CD8-positive, alpha-beta T cell (primary cell): ENCODE measurements at regions of chr3 and their contacts with region 1.

Region 1: DNA sequence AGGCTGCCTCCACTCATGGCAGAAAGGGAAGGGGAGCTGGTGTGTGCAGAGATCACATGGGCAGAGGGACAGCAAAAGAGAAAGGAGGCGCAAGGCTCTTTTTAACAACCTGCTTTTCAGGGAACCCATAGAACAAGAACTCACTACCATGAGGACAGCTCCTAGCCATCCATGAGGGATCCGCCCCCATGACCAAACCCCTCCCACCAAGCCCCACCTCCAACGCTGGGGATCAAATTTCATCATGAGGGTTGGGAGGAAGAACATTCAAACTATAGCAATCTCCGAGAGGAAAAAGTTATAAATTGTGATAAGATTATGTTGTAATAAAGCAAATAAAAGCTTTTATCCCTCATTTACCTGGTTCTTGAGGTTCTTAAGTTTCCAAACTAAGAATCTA is 84.7 kb upstream of the LMCD1 start:
- DNase-seq: peak in 3 of 9 experiments; percentile 4 to 8 (median 8)
- ATAC-seq: no peak
- H3K4me3 ChIP-seq: no peak overlapping the region
- H3K4me3 Mint-ChIP-seq: no peak overlapping the region
- H3K27ac ChIP-seq: no peak overlapping the region
- H3K27ac Mint-ChIP-seq: no peak overlapping the region
- H3K4me1 ChIP-seq: peaks cover 5% of the 10 kb centered on the region
- H3K4me1 Mint-ChIP-seq: peaks cover 8% of the 10 kb centered on the region
- H3K27me3 ChIP-seq: no peaks in the 10 kb centered on the region
- H3K27me3 Mint-ChIP-seq: no peaks in the 10 kb centered on the region
- CTCF ChIP-seq: no peak

Region 2: GRCh38 chr3:7800006-7800780 is 616.8 kb before region 1 on chr3:
- CTCF ChIA-PET with region 1: interaction called, 9 read pairs
- POLR2A ChIA-PET with region 1: no interaction called
- intact Hi-C with region 1: loop called (anchors 5 to 10 kb)
- DNase-seq: peak in 2 of 9 experiments; percentile 7 to 14
- ATAC-seq: no peak
- H3K4me3 ChIP-seq: no peak overlapping the region
- H3K4me3 Mint-ChIP-seq: no peak overlapping the region
- H3K27ac ChIP-seq: no peak overlapping the region
- H3K27ac Mint-ChIP-seq: no peak overlapping the region
- H3K4me1 ChIP-seq: no peaks in the 10 kb centered on the region
- H3K4me1 Mint-ChIP-seq: no peaks in the 10 kb centered on the region
- H3K27me3 ChIP-seq: no peaks in the 10 kb centered on the region
- H3K27me3 Mint-ChIP-seq: no peaks in the 10 kb centered on the region
- CTCF ChIP-seq: peak; percentile 23

Region 3: DNA sequence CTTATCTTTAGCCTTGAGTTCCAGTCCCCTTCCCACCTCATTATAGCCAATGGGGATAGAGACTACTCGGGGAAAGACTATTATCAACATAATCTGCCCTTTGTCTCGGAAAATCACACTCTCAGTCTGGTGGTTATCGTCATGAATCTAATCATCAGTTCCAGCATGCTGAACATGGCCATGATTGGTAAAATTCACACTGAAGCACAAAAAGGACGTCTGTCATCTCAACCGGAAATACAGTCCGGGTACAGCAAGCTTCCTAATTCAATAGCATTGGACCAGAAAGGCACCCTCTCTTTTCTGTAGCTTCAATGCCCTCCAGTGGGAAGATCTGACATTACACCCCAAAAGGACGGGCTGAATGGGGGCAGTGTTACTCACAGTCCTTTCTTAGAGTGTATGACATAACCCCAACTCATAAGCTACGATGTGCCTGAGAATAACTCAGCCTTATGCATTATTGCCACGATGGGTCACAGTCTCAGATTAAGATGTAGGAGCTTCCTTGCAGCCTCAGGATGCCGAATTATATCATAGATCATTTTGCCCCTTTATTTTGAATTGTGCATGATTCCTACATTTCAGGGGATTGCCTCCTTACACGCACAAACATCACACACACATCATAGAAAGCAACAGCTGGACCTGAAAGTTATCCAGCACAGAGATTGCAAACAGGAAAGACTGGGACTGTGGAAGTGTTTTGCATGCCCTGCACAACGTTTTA is 305.7 kb before region 1 on chr3:
- CTCF ChIA-PET with region 1: no interaction called
- POLR2A ChIA-PET with region 1: no interaction called
- intact Hi-C with region 1: loop called in 1 of 2 experiments (anchors 5 kb)
- DNase-seq: peak; percentile 2 to 58 (median 39)
- ATAC-seq: peak; percentile 67
- H3K4me3 ChIP-seq: no peak overlapping the region
- H3K4me3 Mint-ChIP-seq: peak overlapping the region; percentile 27
- H3K27ac ChIP-seq: no peak overlapping the region
- H3K27ac Mint-ChIP-seq: no peak overlapping the region
- H3K4me1 ChIP-seq: no peaks in the 10 kb centered on the region
- H3K4me1 Mint-ChIP-seq: no peaks in the 10 kb centered on the region
- H3K27me3 ChIP-seq: no peaks in the 10 kb centered on the region
- H3K27me3 Mint-ChIP-seq: peaks cover 14% of the 10 kb centered on the region
- CTCF ChIP-seq: peak; percentile 56

Region 4: DNA sequence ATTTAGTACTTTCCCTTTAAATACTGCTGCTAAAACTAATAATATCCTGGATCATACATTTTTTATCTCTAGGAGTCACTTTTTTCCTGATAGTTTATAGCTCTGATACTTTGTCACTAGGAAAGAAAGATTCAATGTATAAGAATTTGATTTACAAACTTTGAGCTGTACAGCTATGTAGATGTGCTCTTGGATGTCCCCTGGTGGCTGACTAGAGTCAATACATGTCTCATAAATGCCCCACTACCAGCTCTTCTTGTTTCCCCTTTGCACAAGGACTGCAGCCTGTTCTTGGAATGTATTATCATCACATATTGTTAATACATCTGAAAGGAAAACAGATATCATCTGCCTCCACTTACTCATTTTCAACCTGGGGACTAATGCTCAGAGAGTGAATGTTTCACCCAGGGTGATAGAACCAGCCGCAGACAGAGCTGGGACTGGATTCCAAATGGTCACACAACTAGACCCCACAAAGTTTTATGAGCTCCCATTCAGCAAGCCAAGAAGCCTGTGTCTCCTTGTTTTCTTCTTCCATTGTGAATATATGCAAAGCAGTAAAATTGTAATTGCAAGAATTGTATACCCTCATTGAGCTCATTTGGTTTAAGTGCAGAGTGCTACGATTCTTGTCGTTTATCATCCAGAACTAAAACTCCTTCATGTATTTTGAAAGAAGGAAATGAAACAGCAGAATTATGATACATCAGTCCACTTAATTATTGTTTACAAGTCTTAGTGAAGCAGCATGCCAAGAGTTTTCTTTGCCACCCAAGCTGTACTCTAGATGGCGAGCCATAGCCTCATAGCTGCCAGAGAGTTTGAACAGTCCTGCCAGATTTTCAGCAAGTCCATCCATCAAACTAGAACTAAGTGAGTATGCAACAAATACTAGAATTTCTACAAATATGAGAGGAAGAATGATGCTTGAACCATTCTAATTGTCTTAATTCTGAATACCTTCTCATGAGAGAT is 177.0 kb before region 1 on chr3:
- CTCF ChIA-PET with region 1: interaction called, 9 read pairs
- POLR2A ChIA-PET with region 1: no interaction called
- intact Hi-C with region 1: loop called in 1 of 2 experiments (anchors 5 kb)
- DNase-seq: peak in 4 of 9 experiments; percentile 11 to 51 (median 32)
- ATAC-seq: no peak
- H3K4me3 ChIP-seq: no peak overlapping the region
- H3K4me3 Mint-ChIP-seq: no peak overlapping the region
- H3K27ac ChIP-seq: no peak overlapping the region
- H3K27ac Mint-ChIP-seq: no peak overlapping the region
- H3K4me1 ChIP-seq: no peaks in the 10 kb centered on the region
- H3K4me1 Mint-ChIP-seq: no peaks in the 10 kb centered on the region
- H3K27me3 ChIP-seq: no peaks in the 10 kb centered on the region
- H3K27me3 Mint-ChIP-seq: no peaks in the 10 kb centered on the region
- CTCF ChIP-seq: peak; percentile 77

Region 5: GRCh38 chr3:8301728-8302462 is 115.1 kb before region 1 on chr3:
- CTCF ChIA-PET with region 1: interaction called, 19 read pairs
- POLR2A ChIA-PET with region 1: no interaction called
- intact Hi-C with region 1: no loop called
- DNase-seq: peak in 2 of 9 experiments; percentile 55 to 61
- ATAC-seq: peak; percentile 34
- H3K4me3 ChIP-seq: no peak overlapping the region
- H3K4me3 Mint-ChIP-seq: no peak overlapping the region
- H3K27ac ChIP-seq: no peak overlapping the region
- H3K27ac Mint-ChIP-seq: no peak overlapping the region
- H3K4me1 ChIP-seq: no peaks in the 10 kb centered on the region
- H3K4me1 Mint-ChIP-seq: peaks cover 6% of the 10 kb centered on the region
- H3K27me3 ChIP-seq: no peaks in the 10 kb centered on the region
- H3K27me3 Mint-ChIP-seq: no peaks in the 10 kb centered on the region
- CTCF ChIP-seq: peak; percentile 66

Region 6: GRCh38 chr3:8405144-8405543 is 11.8 kb before region 1 on chr3:
- CTCF ChIA-PET with region 1: interaction called, 10 read pairs
- POLR2A ChIA-PET with region 1: no interaction called
- intact Hi-C with region 1: no loop called
- DNase-seq: no peak
- ATAC-seq: no peak
- H3K4me3 ChIP-seq: no peak overlapping the region
- H3K4me3 Mint-ChIP-seq: no peak overlapping the region
- H3K27ac ChIP-seq: no peak overlapping the region
- H3K27ac Mint-ChIP-seq: no peak overlapping the region
- H3K4me1 ChIP-seq: no peaks in the 10 kb centered on the region
- H3K4me1 Mint-ChIP-seq: no peaks in the 10 kb centered on the region
- H3K27me3 ChIP-seq: no peaks in the 10 kb centered on the region
- H3K27me3 Mint-ChIP-seq: no peaks in the 10 kb centered on the region
- CTCF ChIP-seq: no peak